OCI-LY7 (cell line): ENCODE measurements at regions of chr2 and their contacts with region 1.

Region 1: DNA sequence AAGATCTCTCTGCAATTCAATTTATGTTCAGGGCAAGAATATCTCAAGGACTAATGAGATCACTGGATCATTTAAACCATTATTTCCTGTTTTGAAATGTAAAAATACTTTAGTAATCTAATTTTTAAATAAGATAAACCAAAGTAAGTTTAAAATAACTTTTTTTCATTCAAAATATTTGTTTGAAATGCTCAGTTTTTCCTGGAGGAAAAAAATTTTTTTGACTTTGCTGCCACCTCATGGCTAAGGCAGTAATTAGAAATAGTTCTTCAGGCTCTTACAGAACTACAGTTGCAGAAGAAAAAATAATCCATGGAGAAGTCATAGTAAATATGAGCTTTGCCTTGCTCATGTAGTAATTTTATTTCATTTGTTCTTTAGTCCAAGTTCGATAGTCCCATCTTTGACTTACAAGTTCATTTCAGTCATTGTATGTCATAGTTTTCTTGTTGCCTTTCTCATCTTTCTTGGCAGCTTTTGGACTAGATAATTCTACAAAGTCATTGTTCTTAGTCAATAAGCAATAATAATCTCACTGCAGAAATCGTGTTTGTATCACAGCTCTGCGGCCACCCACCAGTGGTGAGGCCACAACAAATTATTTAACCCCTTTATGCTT is 127.4 kb downstream of the DPP4 start:
- DNase-seq: peak; percentile 17
- H3K4me3 ChIP-seq: no peak overlapping the region
- H3K27ac ChIP-seq: no peak overlapping the region
- H3K4me1 ChIP-seq: no peaks in the 10 kb centered on the region
- CTCF ChIP-seq: peak; percentile 87

Region 2: DNA sequence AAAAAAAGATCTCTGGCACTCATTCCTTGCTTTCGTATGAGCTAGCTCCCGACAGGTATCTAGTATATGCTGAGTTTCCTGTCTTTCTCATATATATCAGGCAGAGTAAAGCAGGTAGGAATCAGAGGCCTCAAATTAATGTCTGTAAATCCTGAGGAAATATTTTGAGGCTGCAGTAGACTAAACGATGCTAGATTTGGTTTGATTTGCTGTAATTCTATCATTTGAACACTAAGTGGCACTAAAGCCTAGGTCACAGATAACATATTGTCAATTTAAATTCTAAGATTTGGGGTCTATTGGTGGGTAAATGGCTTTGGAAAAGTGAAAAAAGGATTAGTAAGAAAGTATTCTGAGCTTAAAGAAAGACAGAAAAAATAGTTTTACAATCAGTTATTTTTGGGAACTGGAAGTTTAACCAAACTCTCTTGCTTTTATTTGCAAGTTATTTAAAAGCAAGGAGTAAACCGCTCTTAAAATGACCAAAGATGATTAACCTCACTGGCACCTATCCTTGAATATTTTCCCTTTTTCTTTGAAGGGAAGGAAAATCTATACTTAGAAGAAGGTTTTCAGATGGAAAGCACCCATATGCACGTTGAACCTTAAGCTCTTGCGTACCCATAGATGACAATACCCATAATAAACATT is 360.0 kb before region 1 on chr2:
- CTCF ChIA-PET with region 1: no interaction called
- POLR2A ChIA-PET with region 1: interaction called, 3 read pairs
- intact Hi-C with region 1: loop called (anchors 1 kb)
- DNase-seq: peak; percentile 26
- H3K4me3 ChIP-seq: no peak overlapping the region
- H3K27ac ChIP-seq: no peak overlapping the region
- H3K4me1 ChIP-seq: no peaks in the 10 kb centered on the region
- CTCF ChIP-seq: peak; percentile 93